ENCODE measurements at regions of chr9 and their contacts with region 1.

Region 1: GRCh38 chr9:80699511-80699998 is 989.8 kb downstream of the TLE1 start:
- DNase-seq: no peak
- H3K4me3 ChIP-seq: no peak overlapping the region
- H3K27ac ChIP-seq: no peak overlapping the region
- H3K4me1 ChIP-seq: peaks cover 0 to 5% of the 10 kb centered on the region in 2 donors
- H3K27me3 ChIP-seq: no peaks in the 10 kb centered on the region
- CTCF ChIP-seq: no peak

Region 2: GRCh38 chr9:80651044-80651443 is 48.5 kb before region 1 on chr9:
- intact Hi-C with region 1: loop called (anchors 2 kb)
- DNase-seq: no peak
- H3K4me3 ChIP-seq: no peak overlapping the region
- H3K27ac ChIP-seq: peak overlapping the region; percentile 5 to 13
- H3K4me1 ChIP-seq: peaks cover 0 to 16% of the 10 kb centered on the region in 2 donors
- H3K27me3 ChIP-seq: no peaks in the 10 kb centered on the region
- CTCF ChIP-seq: no peak

Measured in ascending aorta (tissue), 2 donors.